CD4-positive, alpha-beta T cell (primary cell): ENCODE measurements at regions of chr17 and their contacts with region 1.

Region 1: DNA sequence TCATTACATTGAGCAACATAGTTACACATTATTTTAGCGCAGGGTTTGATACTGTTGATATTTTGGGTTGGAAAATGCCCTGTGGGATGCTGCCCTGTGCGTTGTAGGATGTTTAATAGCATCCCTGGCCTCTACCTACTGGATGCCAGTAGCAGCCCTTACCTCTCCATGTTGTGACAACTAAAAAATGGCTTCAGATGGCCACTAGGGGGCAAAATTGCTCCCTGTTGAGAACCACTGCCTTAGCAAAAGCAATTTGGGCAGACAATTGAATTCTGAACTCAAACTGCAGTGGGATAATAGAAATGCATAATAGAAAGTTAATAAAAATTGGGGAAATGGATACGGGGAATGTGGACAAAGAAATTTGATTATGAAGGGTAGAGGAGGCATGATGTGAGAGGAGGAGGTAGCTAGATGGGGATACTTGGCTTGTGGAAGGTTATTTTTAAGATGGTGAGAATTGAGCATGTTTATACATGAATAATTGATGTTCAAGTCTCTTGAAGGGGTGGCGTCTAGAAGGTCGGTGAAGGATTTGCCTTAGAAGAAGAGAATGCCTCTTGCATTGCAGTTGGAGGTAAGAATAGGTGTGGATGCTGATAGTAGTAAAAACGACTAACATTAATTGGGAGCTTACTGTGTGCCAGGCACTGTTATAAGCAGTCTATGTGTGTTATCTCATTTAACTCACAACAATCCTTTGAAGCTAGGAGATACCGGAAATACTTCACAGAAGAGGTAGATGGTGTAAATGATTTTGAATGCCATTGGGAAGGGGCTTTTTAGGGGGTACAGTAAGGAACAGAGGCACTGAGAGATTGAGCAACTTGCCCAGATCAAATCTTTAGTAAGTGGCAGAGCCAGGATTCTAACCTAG is 19.0 kb downstream of the HEATR9 start:
- DNase-seq: peak in 13 of 14 experiments; percentile 14 to 80 (median 35)
- ATAC-seq: peak; percentile 51
- H3K4me3 ChIP-seq: no peak overlapping the region
- H3K4me3 Mint-ChIP-seq: no peak overlapping the region
- H3K27ac ChIP-seq: no peak overlapping the region
- H3K27ac Mint-ChIP-seq: peak overlapping the region; percentile 9
- H3K4me1 ChIP-seq: no peaks in the 10 kb centered on the region
- H3K4me1 Mint-ChIP-seq: peaks cover 16% of the 10 kb centered on the region
- H3K27me3 ChIP-seq: no peaks in the 10 kb centered on the region
- H3K27me3 Mint-ChIP-seq: no peaks in the 10 kb centered on the region
- CTCF ChIP-seq: peak; percentile 83

Region 2: DNA sequence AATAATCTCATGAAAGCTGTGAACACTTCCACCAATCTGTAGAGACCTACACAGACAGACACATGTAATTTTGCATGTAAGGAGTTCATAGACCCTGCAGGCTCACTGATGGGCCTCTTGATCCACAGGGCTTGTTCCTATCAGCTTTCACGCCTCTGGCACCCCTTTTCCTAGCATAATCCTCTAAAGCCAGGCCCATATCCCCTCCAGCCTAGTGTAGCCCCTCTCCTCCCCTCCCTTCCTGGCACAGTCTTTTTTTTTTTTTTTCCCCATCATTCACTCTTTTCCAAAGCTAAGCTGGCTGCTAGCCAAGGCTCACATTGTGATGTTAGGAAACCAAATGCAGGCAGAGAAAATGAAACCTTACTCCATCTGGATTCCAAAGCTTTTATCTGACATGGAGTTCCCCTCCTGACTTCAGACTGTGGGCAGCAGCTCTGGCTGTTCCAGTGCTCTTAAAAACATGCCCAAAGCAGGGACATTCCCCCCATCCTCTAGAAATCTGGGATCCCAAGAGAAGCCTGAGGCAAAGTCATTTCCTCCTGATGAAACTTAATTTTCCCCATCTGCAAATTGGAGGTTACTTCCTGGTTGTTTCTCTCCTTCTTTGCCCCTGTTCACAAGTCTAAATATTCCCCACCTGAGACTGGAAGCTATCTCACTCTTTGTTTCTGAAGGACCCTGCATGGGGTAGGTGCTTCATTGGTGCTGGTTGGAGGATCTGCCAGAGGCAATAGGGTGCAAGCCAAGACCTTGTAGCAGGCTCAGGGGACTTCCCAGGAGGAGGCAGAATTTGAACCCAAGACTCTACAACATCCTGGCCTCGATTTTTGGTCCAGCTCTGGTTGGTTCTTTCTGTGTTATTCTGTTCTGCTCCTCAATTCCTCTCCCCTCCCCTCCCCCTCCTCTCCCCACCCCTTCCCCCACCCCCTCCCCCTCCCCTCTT is 40.4 kb after region 1 on chr17:
- CTCF ChIA-PET with region 1: no interaction called
- POLR2A ChIA-PET with region 1: no interaction called
- intact Hi-C with region 1: no loop called
- DNase-seq: peak in 2 of 14 experiments; percentile 38 to 42
- ATAC-seq: no peak
- H3K4me3 ChIP-seq: no peak overlapping the region
- H3K4me3 Mint-ChIP-seq: no peak overlapping the region
- H3K27ac ChIP-seq: no peak overlapping the region
- H3K27ac Mint-ChIP-seq: peak overlapping the region; percentile 76
- H3K4me1 ChIP-seq: peaks cover 63% of the 10 kb centered on the region
- H3K4me1 Mint-ChIP-seq: peaks cover 21% of the 10 kb centered on the region
- H3K27me3 ChIP-seq: no peaks in the 10 kb centered on the region
- H3K27me3 Mint-ChIP-seq: no peaks in the 10 kb centered on the region
- CTCF ChIP-seq: no peak

Region 3: GRCh38 chr17:35947156-35947585 is 97.5 kb after region 1 on chr17:
- CTCF ChIA-PET with region 1: no interaction called
- POLR2A ChIA-PET with region 1: no interaction called
- intact Hi-C with region 1: loop called in 1 of 2 experiments (anchors 5 kb)
- DNase-seq: peak in 13 of 14 experiments; percentile 9 to 71 (median 26)
- ATAC-seq: peak; percentile 85
- H3K4me3 ChIP-seq: no peak overlapping the region
- H3K4me3 Mint-ChIP-seq: no peak overlapping the region
- H3K27ac ChIP-seq: no peak overlapping the region
- H3K27ac Mint-ChIP-seq: no peak overlapping the region
- H3K4me1 ChIP-seq: peaks cover 6% of the 10 kb centered on the region
- H3K4me1 Mint-ChIP-seq: no peaks in the 10 kb centered on the region
- H3K27me3 ChIP-seq: no peaks in the 10 kb centered on the region
- H3K27me3 Mint-ChIP-seq: no peaks in the 10 kb centered on the region
- CTCF ChIP-seq: peak; percentile 68

Region 4: DNA sequence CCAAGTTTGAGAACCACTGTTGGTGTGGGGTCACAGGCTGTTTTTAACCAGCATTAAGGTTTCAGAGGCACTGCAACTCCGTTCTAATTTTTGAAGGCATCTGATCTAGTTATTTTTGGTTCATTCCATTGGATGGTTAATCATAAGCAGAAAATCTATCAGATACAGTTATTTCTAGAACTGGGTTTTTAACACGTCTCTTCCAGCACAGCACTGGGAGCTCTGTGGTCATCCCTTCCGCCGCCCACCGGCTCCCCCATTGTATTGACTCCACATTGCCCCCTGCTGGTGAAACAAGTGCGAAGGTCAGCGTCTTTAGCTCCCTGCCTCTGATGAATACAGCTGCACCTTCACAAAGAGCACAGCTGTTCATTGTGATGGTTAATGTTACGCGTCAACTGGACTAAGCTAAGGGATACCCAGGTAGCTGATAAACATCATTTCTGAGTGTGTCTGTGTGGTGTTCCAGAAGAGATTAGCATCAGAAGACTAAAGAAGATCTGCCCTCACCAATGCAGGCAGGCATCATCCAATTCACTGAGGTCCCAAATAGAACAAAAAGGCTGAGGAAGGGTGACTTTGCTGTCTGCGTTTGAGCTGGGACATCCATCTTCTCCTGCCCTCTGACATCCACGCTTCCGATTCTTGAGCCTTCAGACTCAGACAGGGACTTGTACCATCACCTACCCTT is 222.9 kb after region 1 on chr17:
- CTCF ChIA-PET with region 1: no interaction called
- POLR2A ChIA-PET with region 1: no interaction called
- intact Hi-C with region 1: loop called in 1 of 2 experiments (anchors 10 kb)
- DNase-seq: peak in 12 of 14 experiments; percentile 6 to 74 (median 26)
- ATAC-seq: peak; percentile 37
- H3K4me3 ChIP-seq: no peak overlapping the region
- H3K4me3 Mint-ChIP-seq: no peak overlapping the region
- H3K27ac ChIP-seq: no peak overlapping the region
- H3K27ac Mint-ChIP-seq: no peak overlapping the region
- H3K4me1 ChIP-seq: peaks cover 6% of the 10 kb centered on the region
- H3K4me1 Mint-ChIP-seq: no peaks in the 10 kb centered on the region
- H3K27me3 ChIP-seq: no peaks in the 10 kb centered on the region
- H3K27me3 Mint-ChIP-seq: no peaks in the 10 kb centered on the region
- CTCF ChIP-seq: peak; percentile 59

Region 5: GRCh38 chr17:36148559-36149295 is 299.0 kb after region 1 on chr17:
- CTCF ChIA-PET with region 1: no interaction called
- POLR2A ChIA-PET with region 1: no interaction called
- intact Hi-C with region 1: loop called in 1 of 2 experiments (anchors 10 kb)
- DNase-seq: peak; percentile 24 to 79 (median 49)
- ATAC-seq: peak; percentile 71
- H3K4me3 ChIP-seq: no peak overlapping the region
- H3K4me3 Mint-ChIP-seq: no peak overlapping the region
- H3K27ac ChIP-seq: no peak overlapping the region
- H3K27ac Mint-ChIP-seq: no peak overlapping the region
- H3K4me1 ChIP-seq: peaks cover 4% of the 10 kb centered on the region
- H3K4me1 Mint-ChIP-seq: no peaks in the 10 kb centered on the region
- H3K27me3 ChIP-seq: peaks cover 13% of the 10 kb centered on the region in 2 experiments
- H3K27me3 Mint-ChIP-seq: peaks cover 33% of the 10 kb centered on the region
- CTCF ChIP-seq: peak; percentile 96

Region 6: DNA sequence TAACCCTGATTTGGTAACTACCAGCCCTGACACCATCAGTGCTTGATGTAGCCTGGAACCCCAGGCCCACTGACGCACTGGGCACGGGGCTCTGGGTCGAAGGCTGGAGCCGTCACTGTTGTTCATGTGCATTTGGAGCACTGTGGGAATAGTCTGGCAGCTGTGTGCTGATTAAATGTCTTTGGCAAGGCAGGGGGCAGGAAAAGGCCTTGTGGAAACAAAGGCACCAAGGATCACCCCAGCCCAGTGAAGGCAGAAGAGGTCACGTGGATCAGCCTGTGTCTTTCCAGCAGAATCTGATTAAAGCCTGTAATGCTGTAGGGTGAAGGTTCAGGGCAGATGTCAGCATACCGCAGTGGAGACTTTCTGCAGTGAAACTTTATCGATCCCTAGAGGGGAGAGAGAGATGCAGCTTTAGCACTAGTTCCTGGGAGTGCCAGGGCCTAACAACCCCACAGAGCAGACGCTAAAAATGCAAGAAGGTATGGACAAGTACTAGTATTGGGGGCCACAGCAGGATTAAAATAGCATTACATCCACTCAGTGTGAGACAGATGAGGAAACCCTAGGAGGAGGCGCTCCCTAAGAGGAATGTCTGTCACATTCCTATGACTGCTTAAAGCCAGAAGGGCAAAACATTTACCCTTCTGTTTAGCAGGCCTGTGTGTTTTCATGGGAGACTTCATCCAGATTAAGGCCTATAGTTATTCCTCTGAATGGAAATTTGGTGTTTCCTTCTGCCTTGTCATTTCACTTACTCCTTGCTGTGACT is 646.5 kb after region 1 on chr17:
- CTCF ChIA-PET with region 1: no interaction called
- POLR2A ChIA-PET with region 1: no interaction called
- intact Hi-C with region 1: loop called in 1 of 2 experiments (anchors 10 kb)
- DNase-seq: no peak
- ATAC-seq: no peak
- H3K4me3 ChIP-seq: no peak overlapping the region
- H3K4me3 Mint-ChIP-seq: no peak overlapping the region
- H3K27ac ChIP-seq: no peak overlapping the region
- H3K27ac Mint-ChIP-seq: no peak overlapping the region
- H3K4me1 ChIP-seq: peaks cover 2% of the 10 kb centered on the region
- H3K4me1 Mint-ChIP-seq: peaks cover 13% of the 10 kb centered on the region
- H3K27me3 ChIP-seq: no peaks in the 10 kb centered on the region
- H3K27me3 Mint-ChIP-seq: no peaks in the 10 kb centered on the region
- CTCF ChIP-seq: no peak